ENCODE measurements at regions of chr22 and their contacts with region 1.

Region 1: DNA sequence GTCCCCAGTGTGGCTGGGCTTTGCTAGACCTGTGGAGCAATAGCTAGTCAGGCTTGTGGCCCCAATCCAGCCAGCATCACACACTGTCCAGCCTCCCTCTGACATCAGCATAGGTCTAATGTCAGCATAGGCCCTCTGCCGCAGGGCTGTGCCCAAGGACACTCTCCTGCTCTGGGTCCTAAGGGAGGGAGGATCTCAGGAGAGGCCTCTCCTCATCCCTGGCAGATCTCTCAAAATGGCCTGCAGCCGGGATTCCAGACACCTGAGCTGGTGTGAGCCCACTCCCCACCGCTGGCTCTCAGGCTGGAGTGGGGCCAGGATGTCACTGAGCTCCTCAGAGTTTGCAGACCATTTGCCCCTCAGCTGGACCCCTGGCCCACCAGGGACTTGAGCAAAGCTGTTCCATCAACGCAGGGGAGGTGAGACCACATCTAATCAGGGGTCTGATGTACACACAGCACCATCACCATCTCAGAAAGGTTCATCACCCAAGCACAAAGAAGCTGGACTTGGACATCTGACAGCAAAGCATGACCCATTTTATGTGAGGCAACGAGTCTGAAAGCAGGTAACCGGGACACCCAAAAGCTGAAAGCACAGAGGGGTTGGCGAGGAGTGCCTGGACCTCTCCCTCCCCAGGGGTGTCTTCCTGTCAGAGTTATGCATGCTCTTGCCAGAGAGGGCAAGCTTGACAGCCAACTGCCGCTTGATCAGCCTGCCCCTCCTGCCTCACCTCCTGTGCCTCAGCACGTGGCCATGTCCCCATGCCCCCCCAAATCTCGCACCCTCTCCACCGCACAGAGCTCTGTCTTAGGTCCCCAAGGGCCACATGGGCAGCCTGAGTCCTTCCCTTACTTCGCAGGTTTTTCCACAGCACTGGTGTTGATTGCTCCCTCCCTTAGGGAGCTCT is 69.7 kb upstream of the SEPTIN5 start:
- DNase-seq: no peak
- H3K4me3 ChIP-seq: no peak overlapping the region
- H3K27ac ChIP-seq: no peak overlapping the region
- H3K4me1 ChIP-seq: peaks cover 0 to 2% (median 0%) of the 10 kb centered on the region in 4 experiments; a peak in 4 of 7 replicates
- H3K27me3 ChIP-seq: peaks cover 0 to 2% (median under 1%) of the 10 kb centered on the region in 4 experiments; a peak in 2 of 7 replicates
- CTCF ChIP-seq: no peak
- EP300 ChIP-seq: no peak
- POLR2A ChIP-seq: no peak
- RAD21 ChIP-seq: no peak

Region 2: DNA sequence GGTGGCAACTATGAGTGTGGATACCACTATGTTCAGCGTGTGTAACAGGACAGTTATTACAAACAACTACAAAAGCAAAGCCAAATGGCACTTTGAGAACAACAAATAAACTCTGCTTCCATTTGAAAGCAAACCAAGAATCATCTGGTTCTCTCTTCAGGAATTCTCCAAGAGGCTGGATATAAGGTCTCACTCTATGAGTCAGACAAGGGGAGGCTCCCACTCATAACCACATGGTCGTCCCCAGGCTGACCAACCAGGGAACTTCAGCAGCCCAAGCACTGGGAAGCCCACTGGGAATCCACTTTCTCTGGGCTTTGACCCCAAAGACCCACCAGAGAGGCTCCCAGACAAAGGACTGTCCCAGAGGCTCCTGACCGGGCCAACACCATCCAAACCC is 557.7 kb before region 1 on chr22:
- CTCF ChIA-PET with region 1: no interaction called
- POLR2A ChIA-PET with region 1: no interaction called
- DNase-seq: no peak
- H3K4me3 ChIP-seq: no peak overlapping the region
- H3K27ac ChIP-seq: no peak overlapping the region
- H3K4me1 ChIP-seq: peaks cover 0 to 3% (median 0%) of the 10 kb centered on the region in 4 experiments; a peak in 1 of 7 replicates
- H3K27me3 ChIP-seq: no peaks in the 10 kb centered on the region
- CTCF ChIP-seq: no peak
- EP300 ChIP-seq: no peak
- POLR2A ChIP-seq: no peak
- RAD21 ChIP-seq: no peak

Region 3: GRCh38 chr22:19510919-19511341 is 133.6 kb before region 1 on chr22:
- CTCF ChIA-PET with region 1: no interaction called
- POLR2A ChIA-PET with region 1: no interaction called
- DNase-seq: no peak
- H3K4me3 ChIP-seq: no peak overlapping the region
- H3K27ac ChIP-seq: no peak overlapping the region
- H3K4me1 ChIP-seq: 0 out of 7 replicates have a peak, but pooled peaks cover 0 to 3% (median 0%) of the 10 kb centered on the region in 4 experiments
- H3K27me3 ChIP-seq: no peaks in the 10 kb centered on the region
- CTCF ChIP-seq: no peak
- EP300 ChIP-seq: no peak
- POLR2A ChIP-seq: no peak
- RAD21 ChIP-seq: no peak

Region 4: DNA sequence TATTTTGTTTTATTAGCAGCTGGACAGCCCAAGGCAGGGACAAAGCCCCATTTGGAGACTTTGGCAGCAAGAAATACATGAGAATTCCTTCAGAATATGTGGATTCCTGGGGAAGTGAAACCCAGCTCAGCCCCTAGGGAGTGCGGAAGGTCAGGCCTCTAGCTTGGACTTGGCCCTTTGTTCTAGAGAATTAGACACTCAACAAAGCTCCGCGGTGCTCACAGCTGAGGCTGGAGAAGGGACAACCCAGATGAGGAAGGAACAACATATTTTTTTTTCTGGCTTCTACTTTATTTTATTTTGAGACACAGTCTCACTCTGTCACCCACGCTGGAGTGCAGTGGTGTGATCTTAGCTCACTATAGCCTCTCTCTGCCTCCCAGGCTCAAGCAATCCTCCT is 25.0 kb after region 1 on chr22:
- CTCF ChIA-PET with region 1: interaction called, 13 read pairs
- POLR2A ChIA-PET with region 1: no interaction called
- DNase-seq: no peak
- H3K4me3 ChIP-seq: no peak overlapping the region
- H3K27ac ChIP-seq: no peak overlapping the region
- H3K4me1 ChIP-seq: no peaks in the 10 kb centered on the region; a peak in 1 of 7 replicates
- H3K27me3 ChIP-seq: peaks cover 0 to 5% (median 0%) of the 10 kb centered on the region in 4 experiments; a peak in 2 of 7 replicates
- CTCF ChIP-seq: no peak
- EP300 ChIP-seq: no peak
- POLR2A ChIP-seq: no peak
- RAD21 ChIP-seq: no peak

Region 5: DNA sequence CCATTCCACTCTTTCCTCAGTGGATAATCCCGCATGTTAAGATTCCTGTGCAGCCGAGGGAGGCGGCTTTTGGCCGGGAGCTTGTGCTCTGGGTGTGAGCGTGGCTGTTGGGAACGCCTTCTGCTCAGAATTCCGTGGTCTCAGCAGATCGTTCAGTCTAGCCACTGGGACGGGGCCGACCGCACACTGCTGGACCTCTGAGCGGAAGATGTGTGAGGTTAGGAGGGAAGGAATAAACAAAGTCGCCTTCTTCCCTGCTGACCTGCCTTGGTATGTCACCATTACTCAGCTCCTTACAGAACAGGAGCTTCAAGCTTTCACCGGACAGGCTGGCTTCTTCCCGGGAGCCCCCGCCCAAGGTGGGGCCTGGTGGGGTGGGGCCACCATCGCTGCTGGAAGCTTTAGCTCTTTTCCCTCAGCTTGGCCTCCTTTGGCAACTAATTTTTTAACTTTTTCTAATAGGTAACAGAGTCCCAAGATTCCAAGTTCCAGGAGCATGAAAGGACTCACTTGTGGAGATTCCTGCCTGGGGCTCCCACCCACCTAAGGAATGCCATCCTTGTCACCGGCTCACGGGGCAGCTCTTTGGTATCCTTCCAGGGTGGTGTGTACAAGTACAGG is 47.3 kb after region 1 on chr22:
- CTCF ChIA-PET with region 1: interaction called, 12 read pairs
- POLR2A ChIA-PET with region 1: interaction called, 4 read pairs
- DNase-seq: no peak
- H3K4me3 ChIP-seq: no peak overlapping the region
- H3K27ac ChIP-seq: no peak overlapping the region
- H3K4me1 ChIP-seq: peaks cover 0 to 11% (median 5%) of the 10 kb centered on the region in 4 experiments; a peak in 6 of 7 replicates
- H3K27me3 ChIP-seq: no peaks in the 10 kb centered on the region
- CTCF ChIP-seq: no peak
- EP300 ChIP-seq: no peak
- POLR2A ChIP-seq: no peak
- RAD21 ChIP-seq: no peak

Region 6: GRCh38 chr22:19730655-19731360 is 86.2 kb after region 1 on chr22:
- CTCF ChIA-PET with region 1: no interaction called
- POLR2A ChIA-PET with region 1: no interaction called
- DNase-seq: peak in 1 of 2 experiments; percentile 97
- H3K4me3 ChIP-seq: peak overlapping the region in 3 of 4 experiments; percentile 13 to 49 (median 29); a peak in 4 of 8 replicates
- H3K27ac ChIP-seq: no peak overlapping the region
- H3K4me1 ChIP-seq: peaks cover 0 to 4% (median 2%) of the 10 kb centered on the region in 4 experiments; a peak in 2 of 7 replicates
- H3K27me3 ChIP-seq: peaks cover 16 to 46% (median 40%) of the 10 kb centered on the region in 4 experiments
- CTCF ChIP-seq: peak; percentile 92 to 94 (median 94)
- EP300 ChIP-seq: no peak
- POLR2A ChIP-seq: no peak
- RAD21 ChIP-seq: peak; percentile 96 to 98